ENCODE measurements at regions of chr18 and their contacts with region 1.

Region 1: GRCh38 chr18:33507019-33507418 is 66.5 kb upstream of the CCDC178 start:
- DNase-seq: no peak
- H3K4me3 ChIP-seq: no peak overlapping the region
- H3K27ac ChIP-seq: no peak overlapping the region
- H3K4me1 ChIP-seq: no peaks in the 10 kb centered on the region
- H3K27me3 ChIP-seq: no peaks in the 10 kb centered on the region
- CTCF ChIP-seq: no peak

Region 2: GRCh38 chr18:33440060-33441043 is 66.7 kb before region 1 on chr18 and contains the start of gene CCDC178:
- intact Hi-C with region 1: no loop called
- DNase-seq: peak in 1 of 2 donors; percentile 22
- H3K4me3 ChIP-seq: peak within 1 kb of the TSS; percentile 56 to 74
- H3K27ac ChIP-seq: peak within 1 kb of the TSS; percentile 54 to 64
- H3K4me1 ChIP-seq: peaks cover 0 to 5% (median 1%) of the 10 kb centered on the region in 4 donors
- H3K27me3 ChIP-seq: peaks cover 0 to 3% of the 10 kb centered on the region in 2 donors
- CTCF ChIP-seq: peak; percentile 8 to 35

Region 3: GRCh38 chr18:33483908-33484307 is 23.1 kb before region 1 on chr18:
- intact Hi-C with region 1: loop called (anchors 1 kb)
- DNase-seq: no peak
- H3K4me3 ChIP-seq: no peak overlapping the region
- H3K27ac ChIP-seq: no peak overlapping the region
- H3K4me1 ChIP-seq: no peaks in the 10 kb centered on the region
- H3K27me3 ChIP-seq: no peaks in the 10 kb centered on the region
- CTCF ChIP-seq: no peak

Region 4: GRCh38 chr18:33532978-33533377 is 26.0 kb after region 1 on chr18:
- intact Hi-C with region 1: loop called (anchors 2 kb)
- DNase-seq: no peak
- H3K4me3 ChIP-seq: no peak overlapping the region
- H3K27ac ChIP-seq: no peak overlapping the region
- H3K4me1 ChIP-seq: no peaks in the 10 kb centered on the region
- H3K27me3 ChIP-seq: no peaks in the 10 kb centered on the region
- CTCF ChIP-seq: no peak

Region 5: DNA sequence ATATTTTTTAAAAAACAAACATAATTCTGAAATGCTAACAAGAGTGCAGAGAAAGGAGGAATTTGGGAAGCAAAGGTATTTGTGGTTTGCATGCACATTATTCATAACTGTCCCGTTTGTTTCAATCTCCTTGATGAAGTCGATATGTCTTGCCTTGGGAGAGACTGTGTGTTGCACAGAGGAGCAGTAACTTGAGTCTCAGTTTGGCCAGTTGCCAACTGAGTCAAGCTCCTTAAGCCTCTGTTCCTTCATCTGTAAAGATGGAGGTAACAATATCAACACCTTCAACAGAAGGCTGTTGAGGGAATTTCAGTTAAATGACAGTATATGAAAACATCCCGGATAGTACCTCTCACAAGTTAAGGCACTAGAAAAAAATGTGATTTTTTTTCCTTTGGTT is 297.2 kb after region 1 on chr18:
- intact Hi-C with region 1: no loop called
- DNase-seq: no peak
- H3K4me3 ChIP-seq: no peak overlapping the region
- H3K27ac ChIP-seq: no peak overlapping the region
- H3K4me1 ChIP-seq: no peaks in the 10 kb centered on the region
- H3K27me3 ChIP-seq: no peaks in the 10 kb centered on the region
- CTCF ChIP-seq: no peak